ENCODE measurements at regions of chr7 and their contacts with region 1.

Region 1: DNA sequence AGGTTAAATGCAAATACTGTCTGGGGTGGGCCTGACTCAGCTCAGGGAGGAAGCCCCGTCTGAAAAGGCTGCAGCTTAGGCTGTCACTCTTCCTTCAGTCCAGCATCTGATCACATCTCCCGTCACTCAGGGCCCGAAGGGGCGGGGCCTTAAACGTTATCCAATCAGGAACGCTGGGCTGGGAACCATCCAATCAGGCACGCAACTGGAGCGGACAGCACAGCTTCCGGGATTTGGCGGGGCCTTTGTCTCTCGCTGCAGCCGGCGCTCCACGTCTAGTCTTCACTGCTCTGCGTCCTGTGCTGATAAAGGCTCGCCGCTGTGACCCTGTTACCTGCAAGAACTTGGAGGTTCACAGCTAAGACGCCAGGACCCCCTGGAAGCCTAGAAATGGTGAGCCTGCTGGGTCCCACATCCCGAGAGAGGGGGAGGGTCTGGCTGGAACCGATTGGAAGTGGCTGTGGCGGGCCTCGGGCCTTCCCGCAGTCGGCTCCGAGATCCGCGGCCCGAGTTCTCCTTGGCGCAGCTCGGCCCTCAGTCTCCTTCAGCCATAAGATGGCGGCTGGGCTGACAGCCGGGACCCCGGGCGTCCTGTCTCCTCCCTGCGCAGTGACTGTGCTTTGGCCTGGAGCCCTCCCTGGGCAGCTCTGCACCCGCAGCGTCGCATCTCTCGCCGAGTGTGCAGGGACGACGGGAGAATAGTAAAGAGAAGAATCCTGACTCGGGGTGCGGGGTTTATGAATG is at the start of gene ZNF92:
- DNase-seq: peak; percentile 91
- ATAC-seq: peak; percentile 97
- H3K4me3 Mint-ChIP-seq: peak within 1 kb of the TSS; percentile 96
- H3K27ac Mint-ChIP-seq: peak within 1 kb of the TSS; percentile 91
- H3K4me1 Mint-ChIP-seq: peaks cover 49% of the 10 kb centered on the region
- H3K27me3 Mint-ChIP-seq: no peaks in the 10 kb centered on the region
- CTCF ChIP-seq: no peak
- total RNA-seq, gene ZNF92: 24.6 and 27.1 TPM in 2 replicates

Region 2: GRCh38 chr7:64307254-64308015 is 1066.3 kb before region 1 on chr7:
- CTCF ChIA-PET with region 1: no interaction called
- POLR2A ChIA-PET with region 1: no interaction called
- intact Hi-C with region 1: loop called (anchors 2 kb)
- DNase-seq: peak; percentile 87
- ATAC-seq: peak; percentile 93
- H3K4me3 Mint-ChIP-seq: peak overlapping the region; percentile 94
- H3K27ac Mint-ChIP-seq: peak overlapping the region; percentile 98
- H3K4me1 Mint-ChIP-seq: peaks cover 40% of the 10 kb centered on the region
- H3K27me3 Mint-ChIP-seq: no peaks in the 10 kb centered on the region
- CTCF ChIP-seq: no peak

Region 3: GRCh38 chr7:64794171-64794844 is 579.5 kb before region 1 on chr7 and contains the start of gene ZNF138:
- CTCF ChIA-PET with region 1: no interaction called
- POLR2A ChIA-PET with region 1: interaction called, 5 read pairs
- intact Hi-C with region 1: loop called (anchors 1 kb)
- DNase-seq: peak; percentile 83
- ATAC-seq: peak; percentile 99
- H3K4me3 Mint-ChIP-seq: peak within 1 kb of the TSS; percentile 99
- H3K27ac Mint-ChIP-seq: peak within 1 kb of the TSS; percentile 98
- H3K4me1 Mint-ChIP-seq: peaks cover 27% of the 10 kb centered on the region
- H3K27me3 Mint-ChIP-seq: no peaks in the 10 kb centered on the region
- CTCF ChIP-seq: no peak
- total RNA-seq, gene ZNF138: 14.2 and 17.8 TPM in 2 replicates

Region 4: DNA sequence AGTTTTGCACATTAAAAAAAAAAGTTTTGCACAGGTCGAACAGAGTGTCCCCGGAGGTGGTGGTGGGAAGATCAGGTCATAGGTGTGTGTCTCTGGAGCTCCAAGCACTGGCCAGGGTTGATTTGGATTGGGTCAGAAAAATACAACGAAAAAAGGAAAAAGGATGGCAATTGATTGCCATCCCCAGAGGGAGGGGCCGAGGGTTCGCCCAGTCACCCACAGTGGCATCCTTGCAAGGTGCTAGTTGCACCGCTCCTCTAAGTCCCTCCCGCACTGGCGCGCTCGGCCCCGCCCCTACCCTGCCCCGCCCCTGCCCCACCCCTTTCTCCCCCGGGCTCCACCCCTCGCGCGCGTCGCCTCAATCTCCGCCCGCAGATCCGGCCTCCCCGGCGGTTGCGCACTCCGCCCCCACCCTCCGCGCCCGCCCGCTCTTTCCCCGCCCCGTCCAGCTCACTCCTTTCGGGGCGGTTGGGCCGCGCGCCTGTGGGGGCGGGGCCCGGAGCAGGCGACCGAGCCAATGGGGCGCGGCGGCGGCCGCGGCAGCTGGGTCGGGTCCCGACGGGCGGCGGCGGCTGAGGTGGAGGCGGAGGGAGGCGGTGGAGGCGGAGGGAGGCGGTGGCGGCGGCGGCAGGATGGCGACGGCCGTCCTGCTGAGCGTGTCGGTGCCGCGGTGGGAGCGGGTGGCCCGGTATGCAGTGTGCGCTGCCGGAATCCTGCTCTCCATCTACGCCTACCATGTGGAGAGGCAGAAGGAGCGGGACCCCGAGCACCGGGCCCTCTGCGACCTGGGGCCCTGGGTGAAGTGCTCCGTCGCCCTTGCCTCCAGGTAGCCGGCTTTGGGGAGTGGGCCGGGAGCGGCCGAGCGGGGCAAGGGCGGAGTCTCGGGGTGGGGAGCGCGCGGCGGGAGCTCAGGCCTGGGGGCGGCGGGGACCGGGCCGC is 335.8 kb before region 1 on chr7:
- CTCF ChIA-PET with region 1: no interaction called
- POLR2A ChIA-PET with region 1: no interaction called
- intact Hi-C with region 1: loop called (anchors 2 kb)
- DNase-seq: peak; percentile 61
- ATAC-seq: peak; percentile 94
- H3K4me3 Mint-ChIP-seq: peak overlapping the region; percentile 75
- H3K27ac Mint-ChIP-seq: peak overlapping the region; percentile 65
- H3K4me1 Mint-ChIP-seq: peaks cover 8% of the 10 kb centered on the region
- H3K27me3 Mint-ChIP-seq: no peaks in the 10 kb centered on the region
- CTCF ChIP-seq: no peak

Region 5: GRCh38 chr7:65463184-65463583 is 89.4 kb after region 1 on chr7:
- CTCF ChIA-PET with region 1: no interaction called
- POLR2A ChIA-PET with region 1: no interaction called
- intact Hi-C with region 1: no loop called
- DNase-seq: no peak
- ATAC-seq: no peak
- H3K4me3 Mint-ChIP-seq: no peak overlapping the region
- H3K27ac Mint-ChIP-seq: no peak overlapping the region
- H3K4me1 Mint-ChIP-seq: peaks cover 12% of the 10 kb centered on the region
- H3K27me3 Mint-ChIP-seq: no peaks in the 10 kb centered on the region
- CTCF ChIP-seq: no peak

Region 6: GRCh38 chr7:65509368-65510186 is 135.8 kb after region 1 on chr7:
- CTCF ChIA-PET with region 1: no interaction called
- POLR2A ChIA-PET with region 1: interaction called, 15 read pairs
- intact Hi-C with region 1: loop called (anchors 10 kb)
- DNase-seq: peak; percentile 14
- ATAC-seq: no peak
- H3K4me3 Mint-ChIP-seq: peak overlapping the region; percentile 72
- H3K27ac Mint-ChIP-seq: peak overlapping the region; percentile 59
- H3K4me1 Mint-ChIP-seq: peaks cover 6% of the 10 kb centered on the region
- H3K27me3 Mint-ChIP-seq: peaks cover 15% of the 10 kb centered on the region
- CTCF ChIP-seq: no peak

Region 7: DNA sequence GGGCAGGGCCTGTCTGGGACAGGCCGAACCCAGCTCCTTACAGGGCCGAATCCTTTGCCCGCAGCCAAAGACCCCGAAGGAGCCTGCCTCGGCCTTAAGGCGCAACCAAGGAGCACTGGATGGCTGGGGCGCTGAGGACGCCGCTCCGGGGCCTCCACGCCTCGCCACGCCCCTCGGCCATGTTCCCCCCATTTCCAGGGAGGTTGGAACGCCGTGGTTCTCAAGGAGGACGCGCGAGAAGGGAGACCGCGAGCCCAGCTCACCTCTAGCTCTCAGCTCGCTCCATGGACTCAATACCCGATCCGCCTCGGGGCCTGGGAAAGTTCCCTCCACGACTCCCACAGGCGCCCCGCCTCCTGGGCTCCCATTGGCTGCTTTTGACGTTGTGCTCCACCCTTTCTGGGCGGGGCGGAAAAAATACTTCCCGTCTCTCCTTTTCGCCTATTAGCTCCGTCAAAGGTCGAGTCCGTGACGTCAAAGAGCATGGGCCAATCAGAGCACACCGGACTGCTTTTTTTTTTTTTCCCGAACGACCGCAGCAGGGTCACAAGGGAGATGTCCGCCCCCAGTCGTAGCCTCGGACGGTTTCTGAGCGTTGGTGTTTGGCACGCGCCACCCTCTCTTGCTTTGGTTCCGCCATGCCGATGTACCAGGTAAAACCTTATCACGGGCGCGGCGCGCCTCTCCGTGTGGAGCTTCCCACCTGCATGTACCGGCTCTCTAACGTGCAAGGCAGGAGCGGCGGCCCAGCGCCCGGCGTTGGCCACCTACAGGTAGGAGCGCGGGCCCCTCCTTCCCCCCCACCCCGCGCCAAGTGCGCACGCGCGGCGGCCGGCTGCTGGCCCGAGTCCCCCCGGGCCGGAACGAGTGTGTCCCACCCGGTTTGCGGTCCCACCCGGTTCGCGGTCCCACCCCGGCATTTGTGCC is 1928.6 kb after region 1 on chr7:
- CTCF ChIA-PET with region 1: no interaction called
- POLR2A ChIA-PET with region 1: interaction called, 4 read pairs
- intact Hi-C with region 1: loop called (anchors 10 kb)
- DNase-seq: peak; percentile 95
- ATAC-seq: peak; percentile 86
- H3K4me3 Mint-ChIP-seq: peak overlapping the region; percentile 93
- H3K27ac Mint-ChIP-seq: peak overlapping the region; percentile 94
- H3K4me1 Mint-ChIP-seq: peaks cover 31% of the 10 kb centered on the region
- H3K27me3 Mint-ChIP-seq: no peaks in the 10 kb centered on the region
- CTCF ChIP-seq: no peak

Measured in activated B cell treated with CpG ODN at 0.5 μM for 24 hours (primary cell).